Natural killer cell (primary cell): ENCODE measurements at regions of chr6 and their contacts with region 1.

Region 1: DNA sequence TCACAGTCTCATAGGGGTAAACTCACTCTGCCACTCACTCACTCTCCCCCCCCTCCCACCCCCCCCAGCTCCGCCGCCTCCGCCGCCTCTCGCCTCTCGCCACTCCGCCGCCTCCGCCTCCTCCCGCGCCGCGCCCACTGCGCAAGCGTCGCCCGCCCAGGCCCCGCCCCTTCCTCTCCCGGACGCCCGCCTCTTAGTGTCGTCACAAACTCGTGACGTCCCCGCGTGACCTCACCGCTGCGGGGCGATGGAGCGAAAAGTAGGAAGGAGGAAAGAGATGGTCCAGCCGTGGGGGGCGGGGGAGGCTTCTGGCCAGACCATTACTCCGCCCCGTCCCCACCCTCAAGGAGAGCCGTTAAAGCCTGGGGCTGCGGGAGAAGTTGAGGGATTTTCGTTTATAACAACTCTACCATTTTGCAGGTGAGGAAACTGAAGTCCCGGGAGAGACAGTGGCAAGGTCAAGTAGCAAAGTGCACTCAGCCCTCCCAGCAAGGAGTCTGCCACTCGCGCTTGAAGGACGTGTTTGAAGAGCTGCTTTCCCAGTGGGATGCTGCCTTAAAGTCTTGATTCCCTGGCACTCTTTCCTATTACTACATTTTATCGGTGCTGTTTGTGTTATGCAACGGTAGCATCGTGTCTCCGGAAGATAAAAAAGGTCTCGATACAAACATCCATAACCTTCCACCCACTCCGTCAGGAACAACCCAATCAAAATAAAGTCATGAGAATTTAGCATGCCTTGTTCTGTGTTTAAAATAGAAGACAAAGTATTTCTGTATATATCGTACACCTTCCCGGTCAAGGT is at the start of gene ILRUN:
- DNase-seq: peak; percentile 97
- ATAC-seq: peak; percentile 91 to 96 (median 92)
- H3K4me3 ChIP-seq: peak within 1 kb of the TSS; percentile 87
- H3K4me3 Mint-ChIP-seq: peak within 1 kb of the TSS; percentile 99
- H3K27ac ChIP-seq: peak within 1 kb of the TSS; percentile 84
- H3K27ac Mint-ChIP-seq: peak within 1 kb of the TSS; percentile 96 to 99
- H3K4me1 ChIP-seq: peaks cover 26% of the 10 kb centered on the region
- H3K4me1 Mint-ChIP-seq: peaks cover 31 to 44% of the 10 kb centered on the region in 2 donors
- H3K27me3 ChIP-seq: no peaks in the 10 kb centered on the region
- H3K27me3 Mint-ChIP-seq: peaks cover 0 to 2% of the 10 kb centered on the region in 2 donors
- CTCF ChIP-seq: no peak
- total RNA-seq, gene ILRUN: 91.2 to 101 (median 92.3) TPM

Region 2: DNA sequence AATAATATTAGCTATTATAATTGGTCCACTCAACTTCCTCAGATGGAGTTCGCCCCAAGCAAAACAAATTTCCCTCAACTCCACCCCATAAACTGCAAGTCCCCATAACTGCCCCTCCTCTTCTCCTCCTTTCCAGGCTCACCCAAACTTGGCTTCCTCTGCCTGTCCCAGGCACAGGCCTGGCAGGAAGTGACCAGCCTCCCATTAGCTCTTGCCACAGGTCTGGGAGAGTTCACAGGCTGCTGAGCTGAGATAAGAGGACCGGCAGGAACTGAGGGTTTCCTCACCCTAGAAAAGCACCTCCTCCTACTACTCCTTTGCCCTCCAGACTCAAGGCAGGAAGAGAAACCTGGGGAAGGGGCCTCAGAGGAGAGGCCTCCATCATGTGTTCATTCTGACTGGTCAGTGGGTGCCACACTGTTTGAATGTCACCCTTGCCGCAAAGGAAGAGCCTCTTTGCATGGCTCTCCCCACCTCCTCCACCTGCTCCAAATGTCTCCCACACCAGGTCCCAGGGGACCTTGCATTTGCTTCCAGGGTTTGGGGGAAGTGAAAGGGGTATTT is 423.6 kb before region 1 on chr6:
- intact Hi-C with region 1: no loop called
- DNase-seq: no peak
- ATAC-seq: no peak
- H3K4me3 ChIP-seq: no peak overlapping the region
- H3K4me3 Mint-ChIP-seq: no peak overlapping the region
- H3K27ac ChIP-seq: no peak overlapping the region
- H3K27ac Mint-ChIP-seq: no peak overlapping the region
- H3K4me1 ChIP-seq: peaks cover 11% of the 10 kb centered on the region
- H3K4me1 Mint-ChIP-seq: no peaks in the 10 kb centered on the region
- H3K27me3 ChIP-seq: no peaks in the 10 kb centered on the region
- H3K27me3 Mint-ChIP-seq: no peaks in the 10 kb centered on the region
- CTCF ChIP-seq: no peak

Region 3: GRCh38 chr6:34656378-34657036 is 40.4 kb before region 1 on chr6:
- intact Hi-C with region 1: loop called (anchors 2 kb)
- DNase-seq: peak in 1 of 2 donors; percentile 61
- ATAC-seq: peak; percentile 60 to 70 (median 67)
- H3K4me3 ChIP-seq: peak overlapping the region; percentile 22
- H3K4me3 Mint-ChIP-seq: peak overlapping the region; percentile 82
- H3K27ac ChIP-seq: peak overlapping the region; percentile 72
- H3K27ac Mint-ChIP-seq: peak overlapping the region; percentile 88 to 91
- H3K4me1 ChIP-seq: peaks cover 17% of the 10 kb centered on the region
- H3K4me1 Mint-ChIP-seq: peaks cover 36 to 39% of the 10 kb centered on the region in 2 donors
- H3K27me3 ChIP-seq: no peaks in the 10 kb centered on the region
- H3K27me3 Mint-ChIP-seq: no peaks in the 10 kb centered on the region
- CTCF ChIP-seq: no peak

Region 4: DNA sequence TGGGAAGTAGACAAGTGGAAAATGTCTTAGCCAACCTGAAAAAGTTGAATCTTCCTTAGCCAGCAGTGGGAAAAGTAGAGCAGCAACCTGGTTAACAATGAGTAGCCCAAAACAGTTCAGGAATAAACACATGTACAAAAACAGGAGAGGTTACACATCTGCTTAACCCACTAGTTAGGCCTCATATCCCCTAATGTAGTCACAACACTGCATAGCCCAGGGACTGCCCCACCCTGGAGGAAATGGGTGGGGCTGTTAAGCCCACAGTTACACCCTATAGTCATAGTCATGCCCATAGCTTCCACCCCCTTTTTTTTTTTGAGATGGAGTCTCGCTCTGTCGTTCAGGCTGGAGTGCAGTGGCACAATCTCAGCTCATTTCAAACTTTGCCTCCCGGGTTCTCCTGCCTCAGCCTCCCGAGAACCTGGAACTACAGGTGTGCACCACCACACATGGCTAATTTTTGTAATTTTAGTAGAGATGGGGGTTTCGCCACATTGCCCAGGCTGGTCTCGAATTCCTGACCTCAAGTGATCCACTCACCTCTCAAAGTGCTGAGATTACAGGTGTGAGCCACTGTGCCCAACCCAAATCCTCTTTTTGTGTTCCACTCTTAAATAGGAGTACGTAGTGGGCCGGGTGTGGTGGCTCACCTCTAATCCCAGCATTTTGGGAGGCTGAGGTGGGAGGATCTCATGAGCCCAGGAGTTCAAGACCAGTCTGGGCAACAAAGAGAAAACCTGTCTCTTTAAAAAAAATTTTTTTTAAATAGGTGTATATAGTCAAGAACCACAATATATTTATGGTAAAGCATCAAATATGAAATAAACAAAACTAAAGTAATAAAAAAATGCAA is 24.9 kb before region 1 on chr6:
- intact Hi-C with region 1: loop called (anchors 1 kb)
- DNase-seq: peak; percentile 70 to 91
- ATAC-seq: peak; percentile 91 to 99 (median 98)
- H3K4me3 ChIP-seq: peak overlapping the region; percentile 6
- H3K4me3 Mint-ChIP-seq: peak overlapping the region; percentile 88
- H3K27ac ChIP-seq: peak overlapping the region; percentile 92
- H3K27ac Mint-ChIP-seq: peak overlapping the region; percentile 88 to 97
- H3K4me1 ChIP-seq: peaks cover 49% of the 10 kb centered on the region
- H3K4me1 Mint-ChIP-seq: peaks cover 48 to 57% of the 10 kb centered on the region in 2 donors
- H3K27me3 ChIP-seq: no peaks in the 10 kb centered on the region
- H3K27me3 Mint-ChIP-seq: no peaks in the 10 kb centered on the region
- CTCF ChIP-seq: no peak

Region 5: DNA sequence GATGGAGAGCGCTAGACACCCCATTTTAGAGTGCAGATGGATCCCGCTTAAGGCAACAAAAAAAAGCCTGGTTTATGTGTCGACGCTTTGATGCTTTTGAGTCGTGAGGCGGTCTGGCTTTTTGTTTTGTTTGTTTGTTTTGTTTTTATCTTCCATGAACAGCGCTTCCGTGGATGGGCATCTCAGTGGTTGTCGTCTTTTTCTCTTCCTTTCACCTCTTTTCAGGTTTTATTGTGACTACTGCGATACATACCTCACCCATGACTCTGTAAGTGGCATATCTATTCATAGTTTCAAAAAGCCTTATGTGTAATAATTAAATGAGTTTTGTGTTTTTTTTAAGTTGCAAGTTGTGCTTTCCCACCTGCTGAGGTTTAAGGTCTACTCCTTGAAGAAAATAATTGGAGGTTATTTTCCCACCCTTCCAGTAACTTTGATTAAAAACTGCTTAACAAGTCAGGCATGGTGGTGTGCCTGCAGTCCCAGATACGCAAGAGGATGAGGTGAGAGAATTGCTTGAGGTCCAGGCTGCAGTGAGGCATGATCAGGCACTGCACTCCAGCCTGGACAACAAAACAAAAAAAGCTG is 60.8 kb after region 1 on chr6:
- intact Hi-C with region 1: loop called (anchors 1 kb)
- DNase-seq: no peak
- ATAC-seq: no peak
- H3K4me3 ChIP-seq: peak overlapping the region; percentile 85
- H3K4me3 Mint-ChIP-seq: no peak overlapping the region
- H3K27ac ChIP-seq: peak overlapping the region; percentile 84
- H3K27ac Mint-ChIP-seq: no peak overlapping the region
- H3K4me1 ChIP-seq: peaks cover 15% of the 10 kb centered on the region
- H3K4me1 Mint-ChIP-seq: peaks cover 0 to 4% of the 10 kb centered on the region in 2 donors
- H3K27me3 ChIP-seq: no peaks in the 10 kb centered on the region
- H3K27me3 Mint-ChIP-seq: no peaks in the 10 kb centered on the region
- CTCF ChIP-seq: no peak

Region 6: DNA sequence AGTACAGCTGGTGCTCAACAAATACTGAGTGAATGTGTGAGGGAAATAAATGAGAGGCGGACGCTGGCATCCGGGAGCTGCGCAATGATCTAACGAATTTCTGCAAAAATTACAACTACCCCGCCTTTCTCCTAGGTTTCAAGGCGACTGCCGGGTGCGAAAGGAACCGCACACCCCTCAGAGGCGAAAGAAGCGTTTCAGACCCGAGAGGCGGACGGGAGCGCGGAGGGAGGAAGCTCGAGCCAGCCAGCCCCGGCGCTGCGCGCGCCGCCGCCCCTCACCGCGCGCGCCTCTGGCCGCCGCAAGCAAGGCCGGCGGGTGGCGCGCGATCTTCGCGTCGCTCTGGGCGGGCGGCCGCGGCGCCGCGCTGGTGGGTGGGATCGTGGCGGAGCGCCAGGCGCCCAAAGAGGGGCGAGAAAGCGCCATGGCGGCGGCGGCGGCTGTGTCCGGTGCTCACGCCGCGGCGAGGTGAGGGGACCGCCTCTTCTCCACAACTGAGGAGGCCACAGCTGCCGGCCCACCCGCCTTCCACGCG is 94.8 kb after region 1 on chr6 and contains the start of gene BLTP3A:
- intact Hi-C with region 1: loop called (anchors 10 kb)
- DNase-seq: peak; percentile 80 to 90
- ATAC-seq: peak; percentile 90 to 96 (median 92)
- H3K4me3 ChIP-seq: peak within 1 kb of the TSS; percentile 93
- H3K4me3 Mint-ChIP-seq: peak within 1 kb of the TSS; percentile 93
- H3K27ac ChIP-seq: peak within 1 kb of the TSS; percentile 88
- H3K27ac Mint-ChIP-seq: peak within 1 kb of the TSS; percentile 89 to 97
- H3K4me1 ChIP-seq: peaks cover 18% of the 10 kb centered on the region
- H3K4me1 Mint-ChIP-seq: peaks cover 30 to 35% of the 10 kb centered on the region in 2 donors
- H3K27me3 ChIP-seq: no peaks in the 10 kb centered on the region
- H3K27me3 Mint-ChIP-seq: no peaks in the 10 kb centered on the region
- CTCF ChIP-seq: no peak
- total RNA-seq, gene BLTP3A: 16.6 to 17.5 (median 17.1) TPM

Region 7: GRCh38 chr6:34887753-34888513 is 191.0 kb after region 1 on chr6 and contains the start of gene TAF11:
- intact Hi-C with region 1: loop called (anchors 2 kb)
- DNase-seq: peak; percentile 89 to 97
- ATAC-seq: peak; percentile 76 to 88 (median 77)
- H3K4me3 ChIP-seq: peak within 1 kb of the TSS; percentile 63
- H3K4me3 Mint-ChIP-seq: peak within 1 kb of the TSS; percentile 100
- H3K27ac ChIP-seq: peak within 1 kb of the TSS; percentile 89
- H3K27ac Mint-ChIP-seq: peak within 1 kb of the TSS; percentile 100
- H3K4me1 ChIP-seq: peaks cover 26% of the 10 kb centered on the region
- H3K4me1 Mint-ChIP-seq: peaks cover 50 to 67% of the 10 kb centered on the region in 2 donors
- H3K27me3 ChIP-seq: no peaks in the 10 kb centered on the region
- H3K27me3 Mint-ChIP-seq: no peaks in the 10 kb centered on the region
- CTCF ChIP-seq: no peak
- total RNA-seq, gene TAF11: 34.4 to 41.3 (median 36.2) TPM